ENCODE measurements at regions of chr10 and their contacts with region 1.

Region 1: GRCh38 chr10:11515596-11516430 is 95.6 kb downstream of the USP6NL start:
- DNase-seq: peak; percentile 80
- H3K4me3 ChIP-seq: no peak overlapping the region
- H3K27ac ChIP-seq: peak overlapping the region; percentile 26
- H3K4me1 ChIP-seq: peaks cover 41% of the 10 kb centered on the region
- H3K27me3 ChIP-seq: no peaks in the 10 kb centered on the region
- CTCF ChIP-seq: peak; percentile 86

Region 2: GRCh38 chr10:11611248-11612020 is 95.6 kb after region 1 on chr10 and contains the start of gene USP6NL:
- CTCF ChIA-PET with region 1: no interaction called
- POLR2A ChIA-PET with region 1: no interaction called
- intact Hi-C with region 1: loop called (anchors 2 kb)
- DNase-seq: peak; percentile 92
- H3K4me3 ChIP-seq: peak within 1 kb of the TSS; percentile 95
- H3K27ac ChIP-seq: peak within 1 kb of the TSS; percentile 95
- H3K4me1 ChIP-seq: peaks cover 26% of the 10 kb centered on the region
- H3K27me3 ChIP-seq: no peaks in the 10 kb centered on the region
- CTCF ChIP-seq: no peak
- total RNA-seq, gene USP6NL: 38.7 and 40.0 TPM in 2 replicates

Region 3: GRCh38 chr10:11724938-11725776 is 209.3 kb after region 1 on chr10:
- CTCF ChIA-PET with region 1: interaction called, 17 read pairs
- POLR2A ChIA-PET with region 1: no interaction called
- intact Hi-C with region 1: loop called (anchors 1 kb)
- DNase-seq: peak; percentile 85
- H3K4me3 ChIP-seq: no peak overlapping the region
- H3K27ac ChIP-seq: no peak overlapping the region
- H3K4me1 ChIP-seq: no peaks in the 10 kb centered on the region
- H3K27me3 ChIP-seq: no peaks in the 10 kb centered on the region
- CTCF ChIP-seq: peak; percentile 90

Region 4: DNA sequence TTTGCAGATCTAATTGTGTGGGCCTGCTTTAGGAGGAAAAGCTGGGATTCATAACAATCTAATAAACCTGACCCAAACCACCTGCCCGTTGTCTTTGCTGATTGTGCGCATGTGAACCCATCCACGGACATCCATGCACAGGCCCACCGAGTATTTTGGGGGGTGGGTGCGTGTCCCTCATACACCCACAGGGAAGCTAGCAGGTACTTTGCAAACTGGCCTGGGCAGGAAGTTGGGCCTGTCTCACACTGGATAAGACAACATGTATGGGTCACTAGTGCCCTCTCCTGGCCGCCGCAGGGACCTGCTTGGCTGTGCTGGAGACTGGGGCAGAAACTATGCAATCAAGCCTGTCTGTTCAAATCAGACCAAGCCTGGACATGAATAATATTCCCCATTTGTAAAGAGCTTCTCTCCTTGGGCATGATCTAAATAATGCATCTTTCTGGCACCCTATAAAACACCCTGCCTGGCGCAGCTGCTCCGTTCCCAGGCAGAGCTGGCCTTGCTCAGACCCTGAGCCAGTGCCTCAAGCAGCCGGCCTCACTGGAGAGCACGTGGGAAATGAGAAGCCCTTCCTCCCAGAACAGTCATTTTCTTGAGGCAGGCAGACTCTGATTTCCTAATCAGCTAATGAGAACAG is 242.1 kb after region 1 on chr10:
- CTCF ChIA-PET with region 1: interaction called, 22 read pairs
- POLR2A ChIA-PET with region 1: no interaction called
- intact Hi-C with region 1: loop called (anchors 1 kb)
- DNase-seq: peak; percentile 88
- H3K4me3 ChIP-seq: no peak overlapping the region
- H3K27ac ChIP-seq: peak overlapping the region; percentile 45
- H3K4me1 ChIP-seq: peaks cover 13% of the 10 kb centered on the region
- H3K27me3 ChIP-seq: no peaks in the 10 kb centered on the region
- CTCF ChIP-seq: peak; percentile 94

Region 5: DNA sequence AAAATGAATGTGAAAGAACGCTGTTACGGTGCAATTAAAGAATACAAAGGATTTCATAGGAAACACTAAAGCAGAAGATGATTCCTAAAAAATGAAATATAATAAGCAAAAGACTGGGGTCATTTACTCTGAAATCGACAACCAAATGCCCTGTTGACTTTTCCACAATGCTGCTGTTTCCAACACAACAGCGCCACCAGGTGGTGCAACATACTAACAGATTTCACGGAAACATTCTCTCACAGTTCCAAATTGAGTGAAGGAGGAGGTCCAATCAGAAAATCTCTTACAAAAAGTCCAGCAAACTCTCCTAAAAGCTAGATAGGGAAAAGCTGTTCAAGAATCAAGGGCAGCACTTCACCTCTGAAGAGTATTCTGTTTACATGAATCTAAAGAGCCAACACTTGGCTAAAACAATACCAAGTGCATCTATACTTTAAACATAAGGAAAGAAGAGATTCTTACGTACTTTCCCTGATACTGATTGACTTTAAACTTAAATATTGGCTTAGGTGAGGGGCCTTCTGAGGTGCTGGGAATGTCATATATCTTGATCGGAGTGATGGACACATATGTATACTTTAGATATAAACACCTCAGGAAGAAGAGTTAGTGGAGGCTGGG is 470.9 kb after region 1 on chr10:
- CTCF ChIA-PET with region 1: no interaction called
- POLR2A ChIA-PET with region 1: no interaction called
- intact Hi-C with region 1: loop called (anchors 10 kb)
- DNase-seq: peak; percentile 87
- H3K4me3 ChIP-seq: no peak overlapping the region
- H3K27ac ChIP-seq: no peak overlapping the region
- H3K4me1 ChIP-seq: no peaks in the 10 kb centered on the region
- H3K27me3 ChIP-seq: no peaks in the 10 kb centered on the region
- CTCF ChIP-seq: peak; percentile 92